ENCODE measurements at regions of chr21 and their contacts with region 1.

Region 1: DNA sequence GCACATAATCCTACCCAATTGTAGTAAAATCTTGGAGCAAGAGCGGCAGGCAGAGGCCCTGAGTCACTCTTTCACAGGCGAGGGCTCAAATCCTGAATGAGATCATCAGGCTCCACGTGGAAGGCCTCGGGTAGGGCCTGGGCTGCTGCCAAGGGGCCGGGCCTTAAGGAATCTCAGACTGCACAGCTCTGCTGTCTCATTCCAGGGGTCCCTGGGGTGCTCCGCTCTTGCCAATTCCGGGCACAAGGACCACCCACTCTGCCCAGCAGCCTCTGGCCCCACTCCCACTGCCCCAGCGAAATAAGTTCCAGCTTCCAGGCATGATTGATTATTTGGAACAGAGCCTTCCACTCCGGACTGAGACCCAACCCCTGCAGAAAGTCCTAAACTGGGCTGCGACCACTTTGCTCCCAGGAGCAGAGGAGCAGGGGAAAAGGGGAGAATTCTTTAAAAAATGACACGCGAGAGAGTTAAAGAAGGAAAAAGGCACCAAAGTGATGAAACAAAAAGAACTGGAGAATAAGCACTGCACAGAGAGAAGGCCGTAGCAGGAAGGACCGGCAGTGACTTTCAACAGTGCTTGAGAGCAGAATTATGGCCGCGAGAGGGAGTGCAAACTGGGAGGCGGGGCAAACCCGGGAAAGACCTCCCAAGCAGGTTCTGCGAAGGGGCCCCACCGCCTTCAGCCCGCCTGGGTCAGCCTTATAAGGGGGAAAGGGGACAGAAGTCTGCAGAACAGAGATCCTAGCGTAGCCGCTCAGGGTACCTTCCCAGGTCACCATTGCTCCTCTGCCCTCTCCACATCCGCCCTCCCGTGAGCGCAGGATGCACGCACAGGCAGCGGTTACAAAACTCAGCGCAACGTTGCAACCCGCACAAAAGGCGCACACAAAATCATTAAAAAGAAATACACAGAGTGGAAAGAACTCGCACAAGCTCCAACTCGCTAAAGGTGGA is 2.0 kb downstream of the ADAMTS1 start:
- DNase-seq: peak in 1 of 2 experiments; percentile 58
- H3K4me3 ChIP-seq: no peak overlapping the region
- H3K27ac ChIP-seq: no peak overlapping the region
- H3K4me1 ChIP-seq: 0 out of 2 replicates have a peak, but pooled peaks cover 3% of the 10 kb centered on the region
- H3K27me3 ChIP-seq: no peaks in the 10 kb centered on the region
- CTCF ChIP-seq: no peak

Region 2: DNA sequence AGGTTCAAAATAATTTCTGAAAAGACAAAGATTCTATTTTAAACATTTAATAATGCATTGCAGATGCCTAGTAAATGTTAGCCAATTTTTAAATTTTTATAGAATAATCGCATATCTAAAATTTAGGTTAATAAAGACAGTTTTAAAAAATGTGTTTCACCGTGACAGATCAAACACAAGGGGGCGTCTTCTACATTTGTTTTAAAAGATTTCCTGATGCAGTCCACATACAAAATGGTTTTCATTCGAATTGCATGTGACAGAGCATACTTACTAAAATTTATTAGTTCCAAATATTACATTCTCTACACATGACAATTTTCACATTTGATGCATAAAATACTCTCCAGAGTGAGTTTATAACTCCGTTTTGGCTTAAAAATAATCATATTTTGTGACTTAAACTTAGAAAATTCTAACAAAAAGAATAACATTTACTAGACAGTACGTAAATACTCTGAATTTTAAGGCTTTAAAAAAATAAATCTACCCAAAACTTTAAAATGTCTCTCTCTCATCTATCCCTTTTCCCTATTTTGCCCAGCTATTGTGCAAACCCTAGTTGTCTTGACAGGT is 73.6 kb before region 1 on chr21:
- CTCF ChIA-PET with region 1: no interaction called
- POLR2A ChIA-PET with region 1: no interaction called
- intact Hi-C with region 1: loop called (anchors 1 kb)
- DNase-seq: no peak
- H3K4me3 ChIP-seq: no peak overlapping the region
- H3K27ac ChIP-seq: no peak overlapping the region
- H3K4me1 ChIP-seq: no peaks in the 10 kb centered on the region
- H3K27me3 ChIP-seq: no peaks in the 10 kb centered on the region
- CTCF ChIP-seq: peak; percentile 45